ENCODE measurements at regions of chr10 and their contacts with region 1.

Region 1: GRCh38 chr10:123301077-123301857 is 147.1 kb downstream of the BUB3 start:
- DNase-seq: peak; percentile 73 to 96 (median 90)

Region 2: DNA sequence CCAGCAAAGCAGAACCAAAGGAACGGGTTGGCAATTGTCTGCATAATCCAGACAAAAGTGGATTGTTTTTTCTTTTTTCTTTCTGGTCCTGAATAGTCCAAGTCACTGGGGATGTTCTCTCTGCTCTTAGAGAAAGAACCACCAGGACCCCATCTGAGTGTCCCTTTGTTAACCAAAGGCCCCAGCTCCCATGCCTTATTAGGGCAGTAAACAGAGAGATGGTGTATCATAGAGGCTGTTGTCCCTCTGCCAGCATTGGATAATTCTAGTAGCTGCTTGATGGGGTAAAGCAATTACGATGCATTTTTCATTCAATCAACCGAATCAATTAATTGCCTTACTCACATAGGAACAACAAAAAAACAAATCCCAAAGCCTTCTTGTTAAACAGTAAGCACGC is 65.9 kb after region 1 on chr10:
- intact Hi-C with region 1: loop called (anchors 10 kb)
- DNase-seq: peak in 38 of 42 donors; percentile 10 to 85 (median 64)

Measured in head of caudate nucleus (tissue), 42 donors.